ENCODE measurements at regions of chr20 and their contacts with region 1.

Region 1: GRCh38 chr20:19588732-19589131 is 169.3 kb upstream of the RIN2 start:
- DNase-seq: no peak
- H3K4me3 ChIP-seq: no peak overlapping the region
- H3K27ac ChIP-seq: no peak overlapping the region
- H3K4me1 ChIP-seq: no peaks in the 10 kb centered on the region
- H3K27me3 ChIP-seq: no peaks in the 10 kb centered on the region
- CTCF ChIP-seq: peak in 1 of 2 donors; percentile 9

Region 2: GRCh38 chr20:19531446-19531845 is 57.3 kb before region 1 on chr20:
- CTCF ChIA-PET with region 1: no interaction called
- dilution Hi-C with region 1: loop called (anchors 5 kb)
- in situ Hi-C with region 1: no loop called
- intact Hi-C with region 1: no loop called
- DNase-seq: no peak
- H3K4me3 ChIP-seq: no peak overlapping the region
- H3K27ac ChIP-seq: no peak overlapping the region
- H3K4me1 ChIP-seq: no peaks in the 10 kb centered on the region
- H3K27me3 ChIP-seq: no peaks in the 10 kb centered on the region
- CTCF ChIP-seq: no peak

Region 3: GRCh38 chr20:20549718-20550117 is 961.0 kb after region 1 on chr20:
- CTCF ChIA-PET with region 1: no interaction called
- dilution Hi-C with region 1: no loop called
- in situ Hi-C with region 1: no loop called
- intact Hi-C with region 1: no loop called
- DNase-seq: peak; percentile 93
- H3K4me3 ChIP-seq: peak overlapping the region in 2 of 3 experiments; percentile 22 to 40
- H3K27ac ChIP-seq: peak overlapping the region; percentile 98
- H3K4me1 ChIP-seq: peaks cover 47% of the 10 kb centered on the region
- H3K27me3 ChIP-seq: no peaks in the 10 kb centered on the region
- CTCF ChIP-seq: no peak

Measured in mammary epithelial cell (primary cell).